ENCODE measurements at regions of chr5 and their contacts with region 1.

Region 1: DNA sequence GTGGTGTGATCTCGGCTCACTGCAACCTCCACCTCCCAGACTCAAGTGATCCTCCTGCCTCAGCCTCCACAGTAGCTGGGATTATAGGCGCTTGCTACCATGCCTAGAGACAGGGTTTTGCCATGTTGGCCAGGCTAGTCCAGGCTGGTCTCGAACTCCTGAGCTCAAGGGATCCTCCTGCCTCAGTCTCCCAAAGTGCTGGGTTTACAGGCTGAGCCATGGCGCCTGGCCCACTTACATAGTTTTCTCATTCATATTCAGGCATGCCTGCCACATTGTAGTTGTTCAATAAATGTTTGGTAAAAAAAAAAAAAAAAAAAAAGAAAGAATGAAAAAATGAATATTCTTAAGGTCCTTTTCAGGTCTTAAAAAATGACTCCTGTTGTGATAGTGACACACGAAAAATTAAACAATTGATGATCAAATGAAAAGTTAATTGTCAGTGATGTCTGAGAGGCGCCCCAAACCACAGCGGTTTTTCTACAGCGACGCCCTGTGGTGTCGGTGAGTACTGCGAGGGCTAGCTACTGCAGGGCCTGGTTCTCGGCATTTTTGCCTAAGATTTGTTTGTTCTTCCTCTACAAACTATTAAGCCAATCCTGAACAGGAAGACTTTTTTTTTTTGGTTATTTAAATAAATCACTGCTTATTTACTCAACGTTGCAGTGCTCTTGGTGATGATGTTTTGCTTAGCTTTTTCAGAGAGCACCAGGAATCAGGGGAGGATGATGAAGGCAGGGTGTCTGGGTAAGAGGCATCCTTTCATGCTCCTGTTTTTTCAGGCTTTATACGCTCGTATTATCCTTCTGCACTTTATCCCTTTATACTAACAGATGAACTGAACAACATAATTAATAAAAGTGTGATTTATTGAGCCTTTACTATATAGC is 67.0 kb upstream of the DPYSL3 start:
- DNase-seq: no peak
- H3K4me3 ChIP-seq: no peak overlapping the region
- H3K27ac ChIP-seq: no peak overlapping the region
- H3K4me1 ChIP-seq: peaks cover 0 to 4% of the 10 kb centered on the region in 2 donors
- H3K27me3 ChIP-seq: no peaks in the 10 kb centered on the region
- CTCF ChIP-seq: peak; percentile 78 to 88 (median 80)

Region 2: GRCh38 chr5:146541958-146542849 is 1034.7 kb before region 1 on chr5:
- intact Hi-C with region 1: loop called (anchors 10 kb)
- DNase-seq: peak in 1 of 2 donors; percentile 83
- H3K4me3 ChIP-seq: no peak overlapping the region
- H3K27ac ChIP-seq: no peak overlapping the region
- H3K4me1 ChIP-seq: no peaks in the 10 kb centered on the region
- H3K27me3 ChIP-seq: no peaks in the 10 kb centered on the region
- CTCF ChIP-seq: peak; percentile 64 to 93 (median 82)

Region 3: DNA sequence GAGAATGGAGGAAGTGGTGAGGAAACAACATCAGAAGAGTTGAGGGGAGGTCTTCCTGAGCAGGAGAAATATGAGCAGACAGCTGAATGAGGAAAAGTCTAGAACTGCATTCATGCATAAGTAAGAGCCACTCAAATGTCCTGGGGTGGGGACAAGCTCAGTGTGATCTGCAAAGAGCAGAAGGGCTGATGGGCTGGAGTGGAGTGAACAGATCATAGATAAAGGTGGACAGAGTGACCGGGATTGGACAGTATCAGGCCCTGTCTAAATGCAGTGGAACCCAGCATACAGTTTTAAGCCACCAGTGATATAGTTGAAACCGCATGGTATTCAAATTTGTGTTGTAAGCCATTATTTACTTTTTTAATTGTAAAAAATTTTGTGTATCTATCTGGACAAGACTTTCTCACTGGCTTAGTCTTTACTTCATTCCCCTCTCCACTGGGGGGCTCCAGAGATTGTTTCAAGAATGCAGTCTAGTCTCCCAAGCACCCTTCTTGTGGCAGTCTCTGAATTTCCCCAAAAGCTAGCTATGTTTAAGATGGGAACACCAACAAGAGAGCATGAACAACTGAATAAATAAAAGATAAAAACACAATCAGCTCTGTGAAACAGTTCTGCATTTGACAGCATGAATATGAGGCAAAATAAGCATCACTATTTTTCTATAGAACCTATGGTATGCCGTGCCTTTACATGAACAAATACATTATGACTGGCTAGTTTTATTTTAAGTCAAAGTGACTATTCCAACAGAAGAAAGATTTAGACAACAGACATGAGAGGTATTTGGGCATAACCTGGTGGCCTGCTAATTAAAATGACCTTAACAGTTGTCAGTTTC is 352.7 kb before region 1 on chr5:
- intact Hi-C with region 1: loop called (anchors 5 kb)
- DNase-seq: no peak
- H3K4me3 ChIP-seq: no peak overlapping the region
- H3K27ac ChIP-seq: no peak overlapping the region
- H3K4me1 ChIP-seq: no peaks in the 10 kb centered on the region
- H3K27me3 ChIP-seq: no peaks in the 10 kb centered on the region
- CTCF ChIP-seq: peak; percentile 68 to 83 (median 74)

Region 4: DNA sequence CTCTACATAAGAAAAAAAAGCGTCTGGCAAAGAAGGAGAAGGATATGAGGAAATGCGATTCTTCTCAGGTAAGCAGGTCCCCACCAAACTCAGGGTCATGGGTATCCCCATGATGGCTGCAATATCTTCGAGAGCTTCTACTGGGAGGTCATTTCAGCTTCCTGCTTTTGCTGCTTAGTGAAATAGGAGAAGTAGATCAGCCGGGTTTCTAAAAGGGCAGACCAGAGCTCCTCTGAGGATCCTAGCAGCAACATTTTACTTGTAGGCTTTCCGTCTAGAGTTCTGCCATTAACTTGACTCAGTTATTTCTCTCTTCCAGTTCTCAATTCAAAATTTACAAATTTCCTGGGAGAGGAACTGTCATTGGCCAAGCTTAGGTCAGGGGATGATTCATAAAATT is 201.7 kb before region 1 on chr5:
- intact Hi-C with region 1: loop called (anchors 5 kb)
- DNase-seq: no peak
- H3K4me3 ChIP-seq: no peak overlapping the region
- H3K27ac ChIP-seq: no peak overlapping the region
- H3K4me1 ChIP-seq: no peaks in the 10 kb centered on the region
- H3K27me3 ChIP-seq: no peaks in the 10 kb centered on the region
- CTCF ChIP-seq: no peak

Region 5: DNA sequence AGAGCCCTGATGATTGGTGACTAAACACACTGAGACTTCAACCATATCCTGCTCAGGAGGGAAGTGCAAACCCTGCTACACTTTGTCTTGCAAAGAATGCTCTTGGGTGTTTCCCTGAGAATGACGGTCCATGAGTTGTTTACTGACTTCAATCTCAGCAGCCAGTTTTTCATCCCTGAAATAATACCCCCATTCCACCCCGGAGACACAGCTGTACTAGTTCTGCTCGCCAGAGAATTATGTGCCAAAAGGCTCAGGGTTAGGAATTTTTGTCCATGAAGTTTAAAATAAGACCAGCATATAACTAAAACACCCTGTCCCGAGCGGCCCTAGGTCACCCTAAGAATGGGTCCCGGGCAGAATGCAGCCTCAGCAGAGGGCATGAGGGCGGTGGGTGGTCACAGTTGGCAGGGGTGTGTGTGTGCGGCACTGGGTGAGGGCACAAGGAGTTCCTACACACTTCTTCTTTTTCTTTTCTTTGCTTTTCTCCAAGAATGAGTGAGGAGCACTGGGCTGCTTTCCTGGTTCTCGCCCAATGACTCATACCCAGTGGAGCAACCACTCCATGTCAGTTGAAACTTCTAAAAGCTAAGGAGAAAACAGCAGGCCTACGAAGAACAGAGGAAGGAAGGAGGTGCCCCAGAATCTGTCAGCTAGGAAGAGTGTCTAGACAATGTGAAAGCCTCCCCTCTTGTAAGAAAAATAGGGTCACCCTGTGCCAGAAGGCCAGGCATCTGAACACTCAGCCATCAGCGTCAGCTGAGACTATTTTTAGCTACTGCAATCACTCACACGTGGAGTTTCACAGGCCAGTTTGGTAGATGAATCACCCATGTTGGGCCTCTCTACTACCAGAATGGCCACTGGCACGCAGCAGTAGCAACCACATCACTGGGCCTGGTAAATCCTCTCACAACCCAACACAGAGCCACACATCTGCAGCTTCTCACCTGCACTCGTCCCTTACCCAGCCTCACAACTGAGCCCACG is 172.9 kb before region 1 on chr5:
- intact Hi-C with region 1: loop called (anchors 5 kb)
- DNase-seq: peak; percentile 76 to 94
- H3K4me3 ChIP-seq: peak overlapping the region; percentile 7 to 36
- H3K27ac ChIP-seq: peak overlapping the region; percentile 94 to 98
- H3K4me1 ChIP-seq: peaks cover 22 to 50% of the 10 kb centered on the region in 2 donors
- H3K27me3 ChIP-seq: no peaks in the 10 kb centered on the region
- CTCF ChIP-seq: no peak